CD4-positive, alpha-beta memory T cell (primary cell): ENCODE measurements at regions of chr19 and their contacts with region 1.

Region 1: GRCh38 chr19:10403137-10404021 is at the start of gene CDC37:
- DNase-seq: peak; percentile 96 to 97 (median 97)
- H3K4me3 ChIP-seq: peak within 1 kb of the TSS; percentile 99 to 100
- H3K4me3 Mint-ChIP-seq: peak within 1 kb of the TSS; percentile 90 to 97 (median 96)
- H3K27ac ChIP-seq: peak within 1 kb of the TSS; percentile 92
- H3K27ac Mint-ChIP-seq: peak within 1 kb of the TSS; percentile 96 to 99 (median 98)
- H3K4me1 ChIP-seq: peaks cover 75% of the 10 kb centered on the region
- H3K4me1 Mint-ChIP-seq: peaks cover 37 to 86% (median 64%) of the 10 kb centered on the region in 4 donors
- H3K27me3 ChIP-seq: no peaks in the 10 kb centered on the region
- H3K27me3 Mint-ChIP-seq: peaks cover 0 to 2% of the 10 kb centered on the region in 2 donors
- total RNA-seq, gene CDC37: 180 to 185 TPM

Region 2: GRCh38 chr19:10106100-10106936 is 297.1 kb before region 1 on chr19 and contains the start of gene PPAN:
- CTCF ChIA-PET with region 1: interaction called, 3 read pairs
- POLR2A ChIA-PET with region 1: interaction called, 3 read pairs
- intact Hi-C with region 1: loop called (anchors 10 kb)
- DNase-seq: peak; percentile 96 to 98 (median 98)
- H3K4me3 ChIP-seq: peak within 1 kb of the TSS; percentile 58 to 74
- H3K4me3 Mint-ChIP-seq: peak within 1 kb of the TSS; percentile 72 to 92 (median 88)
- H3K27ac ChIP-seq: peak within 1 kb of the TSS; percentile 89
- H3K27ac Mint-ChIP-seq: peak within 1 kb of the TSS; percentile 95 to 100 (median 97)
- H3K4me1 ChIP-seq: peaks cover 77% of the 10 kb centered on the region
- H3K4me1 Mint-ChIP-seq: peaks cover 38 to 86% (median 59%) of the 10 kb centered on the region in 4 donors
- H3K27me3 ChIP-seq: no peaks in the 10 kb centered on the region
- H3K27me3 Mint-ChIP-seq: no peaks in the 10 kb centered on the region
- total RNA-seq, gene PPAN: 92.5 to 102 TPM

Region 3: DNA sequence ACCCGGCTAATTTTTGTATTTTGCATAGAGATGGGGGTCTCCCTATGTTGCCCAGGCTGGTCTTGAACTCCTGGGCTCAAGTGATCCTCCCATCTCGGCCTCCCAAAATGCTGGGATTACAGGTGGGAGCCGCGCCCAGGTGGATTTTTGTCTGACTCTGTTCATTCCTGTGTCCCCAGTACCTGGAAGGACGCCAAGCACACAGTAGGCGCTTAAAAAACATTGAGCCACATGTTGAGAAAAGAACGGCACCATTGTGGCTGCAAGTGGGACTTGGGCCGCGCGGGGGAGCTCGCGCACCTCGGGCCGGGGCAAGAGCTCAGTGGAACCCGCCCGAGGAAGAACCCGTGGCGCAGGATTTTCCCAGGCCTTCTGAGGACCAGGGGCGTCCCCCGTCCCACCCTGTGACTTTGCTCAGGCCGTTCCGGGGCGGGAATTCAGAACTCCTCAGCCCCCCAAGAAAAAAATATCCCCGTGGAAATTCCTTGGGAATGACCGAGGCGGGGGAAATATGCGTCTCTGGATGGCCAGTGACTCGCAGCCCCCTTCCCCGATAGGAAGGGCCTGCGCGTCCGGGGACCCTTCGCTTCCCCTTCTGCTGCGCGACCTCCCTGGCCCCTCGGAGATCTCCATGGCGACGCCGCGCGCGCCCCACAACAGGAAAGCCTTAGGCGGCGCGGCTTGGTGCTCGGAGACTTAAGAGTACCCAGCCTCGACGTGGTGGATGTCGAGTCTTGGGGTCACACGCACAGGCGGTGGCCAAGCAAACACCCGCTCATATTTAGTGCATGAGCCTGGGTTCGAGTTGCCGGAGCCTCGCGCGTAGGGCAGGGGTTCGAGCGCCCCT is 133.8 kb before region 1 on chr19:
- CTCF ChIA-PET with region 1: interaction called, 15 read pairs
- POLR2A ChIA-PET with region 1: interaction called, 9 read pairs
- intact Hi-C with region 1: no loop called
- DNase-seq: peak; percentile 81 to 87 (median 85)
- H3K4me3 ChIP-seq: peak overlapping the region; percentile 47 to 82
- H3K4me3 Mint-ChIP-seq: peak overlapping the region; percentile 81 to 91 (median 86)
- H3K27ac ChIP-seq: peak overlapping the region; percentile 88
- H3K27ac Mint-ChIP-seq: peak overlapping the region; percentile 91 to 96 (median 95)
- H3K4me1 ChIP-seq: peaks cover 34% of the 10 kb centered on the region
- H3K4me1 Mint-ChIP-seq: peaks cover 9 to 42% (median 24%) of the 10 kb centered on the region in 4 donors
- H3K27me3 ChIP-seq: no peaks in the 10 kb centered on the region
- H3K27me3 Mint-ChIP-seq: no peaks in the 10 kb centered on the region

Region 4: DNA sequence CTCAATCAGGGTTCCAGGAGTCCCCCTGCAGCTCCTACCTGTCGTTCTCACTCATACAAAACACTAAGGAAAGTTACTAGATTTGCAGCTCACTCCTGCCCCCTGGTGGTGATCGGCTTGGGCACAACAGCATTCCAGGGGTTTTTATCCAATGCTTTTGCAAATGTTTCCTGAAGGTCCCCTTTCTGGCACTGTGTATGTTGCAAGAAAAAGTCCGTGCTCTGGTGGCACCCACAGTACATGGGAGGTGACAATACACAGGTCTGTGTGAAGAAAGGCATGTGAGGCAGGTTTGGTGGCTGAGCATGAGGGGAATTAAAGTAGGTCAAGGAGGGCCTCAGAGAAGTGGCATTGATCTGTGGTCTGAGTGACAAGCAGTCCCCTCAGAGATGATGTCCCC is 14.4 kb before region 1 on chr19:
- CTCF ChIA-PET with region 1: interaction called, 46 read pairs
- POLR2A ChIA-PET with region 1: interaction called, 4 read pairs
- intact Hi-C with region 1: no loop called
- DNase-seq: peak; percentile 68 to 78 (median 75)
- H3K4me3 ChIP-seq: no peak overlapping the region
- H3K4me3 Mint-ChIP-seq: no peak overlapping the region
- H3K27ac ChIP-seq: no peak overlapping the region
- H3K27ac Mint-ChIP-seq: peak overlapping the region; percentile 10 to 79 (median 47)
- H3K4me1 ChIP-seq: no peaks in the 10 kb centered on the region
- H3K4me1 Mint-ChIP-seq: peaks cover 5 to 11% (median 6%) of the 10 kb centered on the region in 4 donors
- H3K27me3 ChIP-seq: no peaks in the 10 kb centered on the region
- H3K27me3 Mint-ChIP-seq: no peaks in the 10 kb centered on the region

Region 5: DNA sequence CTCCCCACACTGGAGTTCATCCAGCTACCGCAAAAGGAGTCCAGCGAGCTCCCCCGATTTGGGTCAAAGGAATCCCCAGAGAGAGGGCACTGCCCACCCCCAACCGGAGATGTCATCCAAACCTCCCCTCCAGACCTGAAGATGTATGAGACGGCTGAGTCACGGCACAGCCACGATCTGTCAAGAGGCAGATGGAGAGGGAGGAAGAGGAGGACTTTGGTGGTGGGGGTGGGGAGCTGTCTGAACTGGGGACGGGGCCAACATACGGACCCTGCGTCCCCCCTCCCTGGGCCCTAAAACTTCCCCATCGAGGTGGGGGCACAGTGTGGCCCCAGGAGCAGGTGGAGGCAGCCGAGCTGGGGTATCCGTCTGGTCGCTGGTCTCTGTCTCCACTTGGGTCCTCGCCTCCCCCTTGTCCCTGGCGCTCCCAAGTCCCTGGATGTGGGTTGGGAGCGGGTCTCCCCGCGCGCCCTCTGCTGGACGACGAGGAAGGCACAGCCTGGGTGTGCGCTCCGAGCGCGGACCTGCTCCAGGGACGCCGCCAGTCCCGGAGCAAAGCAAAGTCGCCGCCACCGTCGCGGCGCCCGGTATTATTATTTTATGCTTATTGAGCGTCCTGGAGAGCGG is 20.7 kb after region 1 on chr19:
- CTCF ChIA-PET with region 1: interaction called, 379 read pairs
- POLR2A ChIA-PET with region 1: interaction called, 470 read pairs
- intact Hi-C with region 1: loop called (anchors 1 kb)
- DNase-seq: peak in 4 of 5 donors; percentile 59 to 86 (median 64)
- H3K4me3 ChIP-seq: peak overlapping the region in 1 of 2 donors; percentile 60
- H3K4me3 Mint-ChIP-seq: peak overlapping the region in 7 of 8 donors; percentile 52 to 79 (median 61)
- H3K27ac ChIP-seq: peak overlapping the region; percentile 38
- H3K27ac Mint-ChIP-seq: peak overlapping the region; percentile 36 to 99 (median 97)
- H3K4me1 ChIP-seq: peaks cover 73% of the 10 kb centered on the region
- H3K4me1 Mint-ChIP-seq: peaks cover 35 to 79% (median 60%) of the 10 kb centered on the region in 4 donors
- H3K27me3 ChIP-seq: peaks cover 33% of the 10 kb centered on the region
- H3K27me3 Mint-ChIP-seq: peaks cover 29 to 46% of the 10 kb centered on the region in 2 donors

Region 6: GRCh38 chr19:10478903-10479384 is 75.6 kb after region 1 on chr19:
- CTCF ChIA-PET with region 1: interaction called, 5 read pairs
- POLR2A ChIA-PET with region 1: interaction called, 3 read pairs
- intact Hi-C with region 1: loop called (anchors 2 kb)
- DNase-seq: peak; percentile 87 to 95 (median 90)
- H3K4me3 ChIP-seq: peak overlapping the region in 1 of 2 donors; percentile 38
- H3K4me3 Mint-ChIP-seq: peak overlapping the region; percentile 26 to 79 (median 70)
- H3K27ac ChIP-seq: peak overlapping the region; percentile 57
- H3K27ac Mint-ChIP-seq: peak overlapping the region; percentile 70 to 92 (median 88)
- H3K4me1 ChIP-seq: peaks cover 13% of the 10 kb centered on the region
- H3K4me1 Mint-ChIP-seq: peaks cover 4 to 20% (median 7%) of the 10 kb centered on the region in 4 donors
- H3K27me3 ChIP-seq: no peaks in the 10 kb centered on the region
- H3K27me3 Mint-ChIP-seq: no peaks in the 10 kb centered on the region

Region 7: DNA sequence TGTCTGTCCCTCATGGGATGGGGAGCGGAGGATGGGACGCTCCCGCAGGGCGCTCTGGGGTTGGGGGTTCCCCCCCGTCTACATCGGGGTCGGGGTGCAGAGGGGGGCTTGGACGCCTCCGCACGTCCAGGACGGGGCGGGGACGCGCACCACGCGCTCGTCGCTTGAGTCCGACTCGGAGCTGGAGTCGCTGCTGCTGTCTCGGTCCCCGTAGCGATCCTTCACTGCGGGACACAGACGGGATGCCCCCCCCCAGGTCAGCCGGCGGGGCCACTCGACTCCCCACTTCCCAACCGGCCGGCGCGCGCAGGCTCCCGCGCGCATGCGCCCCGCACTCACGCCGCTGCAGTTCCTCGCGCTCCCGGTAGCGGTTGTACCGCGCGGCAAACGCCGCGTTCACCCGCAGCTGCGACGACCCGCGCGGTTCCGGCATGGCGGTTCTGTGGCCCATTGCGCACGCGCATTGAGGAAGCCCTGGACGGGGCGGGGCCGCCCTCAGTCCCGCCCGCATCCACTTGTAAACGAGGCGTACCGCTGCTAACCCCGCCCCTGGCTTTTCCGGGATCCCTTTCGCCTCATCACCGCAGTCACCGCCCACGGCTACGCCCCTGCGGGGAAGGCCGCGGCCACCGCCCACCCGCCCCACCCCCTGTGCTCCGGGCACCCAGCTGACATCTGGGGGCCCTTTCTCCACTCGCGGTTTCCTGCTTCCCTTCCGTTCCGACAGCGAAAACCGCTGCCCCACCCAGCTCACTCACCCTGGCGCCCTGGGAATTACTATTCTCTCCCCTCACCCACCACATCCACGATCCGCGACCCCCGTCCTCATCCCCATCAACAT is 162.4 kb after region 1 on chr19 and contains the start of gene KRI1:
- CTCF ChIA-PET with region 1: interaction called, 3 read pairs
- POLR2A ChIA-PET with region 1: interaction called, 8 read pairs
- intact Hi-C with region 1: loop called (anchors 1 kb)
- DNase-seq: peak; percentile 98 to 100 (median 99)
- H3K4me3 ChIP-seq: peak within 1 kb of the TSS; percentile 95 to 97
- H3K4me3 Mint-ChIP-seq: peak within 1 kb of the TSS; percentile 90 to 99 (median 98)
- H3K27ac ChIP-seq: peak within 1 kb of the TSS; percentile 94
- H3K27ac Mint-ChIP-seq: peak within 1 kb of the TSS; percentile 95 to 99 (median 98)
- H3K4me1 ChIP-seq: peaks cover 37% of the 10 kb centered on the region
- H3K4me1 Mint-ChIP-seq: peaks cover 22 to 50% (median 33%) of the 10 kb centered on the region in 4 donors
- H3K27me3 ChIP-seq: no peaks in the 10 kb centered on the region
- H3K27me3 Mint-ChIP-seq: no peaks in the 10 kb centered on the region
- total RNA-seq, gene KRI1: 72.7 to 73.0 TPM